Heart left ventricle (tissue), 16 donors: ENCODE measurements at regions of chr3 and their contacts with region 1.

Region 1: DNA sequence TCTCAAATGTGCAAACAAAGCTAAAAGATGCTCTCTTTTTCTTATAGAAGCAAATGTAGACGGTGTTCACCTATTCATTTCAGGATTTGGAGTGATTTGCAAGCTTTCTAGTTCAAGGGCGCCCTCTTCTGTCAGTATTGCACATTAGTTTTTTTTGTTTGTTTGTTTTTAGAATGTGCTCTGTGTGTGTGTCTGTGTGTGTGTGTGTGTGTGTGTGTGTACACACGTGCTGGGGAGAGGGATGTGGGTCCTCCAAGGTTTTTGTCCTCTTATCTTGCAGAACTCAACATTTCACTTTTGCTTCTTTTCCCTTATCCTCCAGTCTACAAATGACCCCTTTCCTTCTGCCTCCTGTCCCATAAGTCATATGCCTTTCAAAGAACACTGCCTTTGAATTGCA is 23.5 kb downstream of the DNAH1 start:
- DNase-seq: peak in 2 of 5 donors; percentile 28 to 35
- ATAC-seq: peak in 3 of 4 donors; percentile 40 to 59 (median 52)
- H3K4me3 ChIP-seq: no peak overlapping the region
- H3K27ac ChIP-seq: no peak overlapping the region
- H3K4me1 ChIP-seq: no peaks in the 10 kb centered on the region
- H3K27me3 ChIP-seq: no peaks in the 10 kb centered on the region
- CTCF ChIP-seq: peak; percentile 53 to 82 (median 72)
- POLR2A ChIP-seq: no peak

Region 2: DNA sequence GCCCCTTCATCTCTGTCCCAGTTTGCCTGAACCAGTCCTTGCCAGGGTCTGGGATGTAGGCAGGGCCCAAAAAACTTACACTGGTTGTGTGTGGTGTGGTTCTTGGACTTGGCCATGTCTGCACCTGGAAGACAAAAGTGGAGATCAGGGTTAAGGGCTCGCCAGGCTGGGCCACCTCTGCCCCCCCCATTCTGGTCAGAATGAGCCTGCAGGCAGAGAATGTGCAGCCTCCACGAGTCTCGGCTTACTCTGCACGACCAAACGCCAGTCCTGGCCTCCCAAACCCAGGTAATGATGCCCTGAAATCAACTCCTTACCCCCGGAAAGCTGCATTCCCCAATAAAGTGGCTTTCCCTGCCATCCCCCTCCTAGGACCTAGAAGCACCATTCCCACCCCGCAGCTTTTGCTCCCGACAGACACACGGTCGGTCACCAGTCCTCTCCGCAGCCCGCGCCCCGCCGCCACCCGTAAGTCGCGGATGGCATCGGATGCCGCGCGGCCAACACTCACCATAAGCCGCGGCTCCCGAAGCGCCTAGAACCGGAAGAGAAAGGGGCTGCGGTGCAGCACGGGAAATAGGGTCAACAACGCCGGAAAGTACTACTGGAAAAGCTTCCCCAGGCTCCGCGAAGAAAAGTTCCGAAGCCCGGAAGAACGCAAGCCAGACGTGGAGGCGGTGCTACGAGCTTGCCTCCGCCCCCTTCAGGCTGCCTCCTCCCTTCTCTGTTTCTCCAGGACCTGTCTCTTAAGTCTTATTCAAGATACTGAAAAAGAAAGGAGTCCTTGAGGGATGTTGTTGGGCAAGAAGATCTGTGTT is 344.1 kb before region 1 on chr3 and contains the start of gene RPL29:
- intact Hi-C with region 1: loop called in 8 of 10 experiments (anchors 5 to 10 kb)
- DNase-seq: peak; percentile 90 to 93 (median 92)
- ATAC-seq: peak; percentile 91 to 96 (median 94)
- H3K4me3 ChIP-seq: peak within 1 kb of the TSS; percentile 67 to 94 (median 76)
- H3K27ac ChIP-seq: peak within 1 kb of the TSS; percentile 63 to 95 (median 85)
- H3K4me1 ChIP-seq: peaks cover 0 to 25% (median 12%) of the 10 kb centered on the region in 12 donors
- H3K27me3 ChIP-seq: no peaks in the 10 kb centered on the region
- CTCF ChIP-seq: peak in 8 of 12 donors; percentile 22 to 67 (median 30)
- POLR2A ChIP-seq: peak in 1 of 2 donors; percentile 56
- total RNA-seq, gene RPL29: 515 to 986 (median 681) TPM

Region 3: GRCh38 chr3:52144034-52144795 is 195.4 kb before region 1 on chr3:
- intact Hi-C with region 1: loop called in 1 of 10 experiments (anchors 5 kb)
- DNase-seq: peak; percentile 86 to 89 (median 89)
- ATAC-seq: peak; percentile 38 to 81 (median 76)
- H3K4me3 ChIP-seq: no peak overlapping the region
- H3K27ac ChIP-seq: no peak overlapping the region
- H3K4me1 ChIP-seq: peaks cover 0 to 21% (median 6%) of the 10 kb centered on the region in 12 donors
- H3K27me3 ChIP-seq: no peaks in the 10 kb centered on the region
- CTCF ChIP-seq: peak; percentile 90 to 99 (median 98)
- POLR2A ChIP-seq: no peak

Region 4: DNA sequence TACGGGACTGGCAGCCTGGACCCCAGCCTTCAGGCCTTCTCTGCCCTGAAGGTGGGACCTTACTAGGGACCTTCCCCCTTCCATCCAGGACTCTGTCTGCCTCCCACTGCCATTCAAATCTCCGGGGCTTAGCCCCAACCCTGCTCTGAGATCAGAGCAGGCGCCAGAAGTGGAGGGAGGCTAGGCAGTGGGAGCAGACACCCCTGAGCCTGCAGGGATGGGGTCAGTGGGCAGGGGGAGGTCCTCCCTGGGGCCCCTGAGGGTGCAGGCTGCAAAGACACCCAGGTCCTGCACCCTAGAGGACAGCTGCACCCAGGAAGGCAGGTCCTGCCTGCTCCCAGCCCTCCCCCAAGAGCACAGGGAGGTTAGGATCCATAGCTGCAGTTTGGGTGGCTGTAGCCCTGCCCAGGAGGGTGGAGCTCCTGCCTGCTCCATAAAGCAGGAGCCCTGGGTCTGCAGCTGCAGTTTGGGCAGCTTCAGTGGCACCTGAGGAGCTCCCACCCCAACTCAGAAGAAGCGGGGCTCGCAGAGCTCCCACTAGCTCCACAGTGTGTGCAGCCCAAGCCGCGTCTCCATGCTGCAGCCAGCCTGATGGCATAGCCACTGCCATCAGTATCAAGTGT is 177.3 kb before region 1 on chr3:
- intact Hi-C with region 1: loop called in 2 of 10 experiments (anchors 5 to 10 kb)
- DNase-seq: no peak
- ATAC-seq: peak in 1 of 4 donors; percentile 29
- H3K4me3 ChIP-seq: no peak overlapping the region
- H3K27ac ChIP-seq: no peak overlapping the region
- H3K4me1 ChIP-seq: no peaks in the 10 kb centered on the region
- H3K27me3 ChIP-seq: no peaks in the 10 kb centered on the region
- CTCF ChIP-seq: no peak
- POLR2A ChIP-seq: no peak

Region 5: DNA sequence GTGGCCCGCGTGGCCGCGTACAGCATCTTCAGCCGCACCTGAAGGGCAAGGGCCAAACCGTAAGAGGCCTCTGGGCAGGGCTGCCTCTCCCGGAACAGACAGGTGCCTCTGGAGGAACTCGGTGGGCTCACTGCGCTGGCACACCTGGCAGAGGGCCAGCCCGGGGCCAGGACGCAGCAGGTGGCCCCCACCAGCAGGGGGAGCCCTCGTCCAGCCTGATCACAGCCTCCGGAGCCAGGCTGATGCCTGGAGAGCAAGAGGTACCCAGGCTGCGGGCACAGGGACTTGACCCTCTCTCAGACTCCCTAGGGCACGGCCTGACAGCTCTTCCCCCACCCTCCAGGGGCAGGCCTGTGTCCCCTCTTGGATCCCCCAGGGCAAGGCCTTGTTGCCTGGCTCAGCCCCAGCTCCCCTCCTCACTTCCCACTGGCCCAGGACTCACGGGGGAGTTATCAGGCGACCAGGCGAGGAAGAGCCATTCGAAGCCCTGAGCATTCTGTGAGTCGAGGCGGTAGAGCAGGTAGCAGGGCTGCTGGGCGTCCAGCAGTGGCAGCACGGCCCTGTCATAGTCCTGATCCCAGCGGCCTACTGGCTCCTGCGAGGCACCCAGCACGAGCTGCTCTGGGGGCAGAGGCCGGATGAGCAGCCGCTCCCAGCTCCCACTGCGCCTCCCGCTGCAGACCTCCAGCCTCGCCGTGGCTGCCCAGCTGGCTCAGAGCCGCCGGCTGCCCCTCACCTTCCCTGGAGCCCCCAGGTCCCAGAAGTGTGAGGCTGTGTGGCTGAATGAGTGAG is 107.9 kb before region 1 on chr3:
- intact Hi-C with region 1: loop called in 6 of 10 experiments (anchors 2 to 5 kb)
- DNase-seq: peak; percentile 72 to 91 (median 80)
- ATAC-seq: peak in 3 of 4 donors; percentile 8 to 37 (median 37)
- H3K4me3 ChIP-seq: peak overlapping the region in 6 of 12 donors; percentile 0 to 59 (median 24)
- H3K27ac ChIP-seq: peak overlapping the region in 2 of 12 donors; percentile 4 to 33
- H3K4me1 ChIP-seq: peaks cover 0 to 51% (median 31%) of the 10 kb centered on the region in 12 donors
- H3K27me3 ChIP-seq: no peaks in the 10 kb centered on the region
- CTCF ChIP-seq: peak; percentile 80 to 92 (median 83)
- POLR2A ChIP-seq: no peak

Region 6: GRCh38 chr3:52291508-52292181 is 48.0 kb before region 1 on chr3:
- intact Hi-C with region 1: loop called (anchors 1 to 5 kb)
- DNase-seq: no peak
- ATAC-seq: no peak
- H3K4me3 ChIP-seq: no peak overlapping the region
- H3K27ac ChIP-seq: no peak overlapping the region
- H3K4me1 ChIP-seq: peaks cover 0 to 20% (median 11%) of the 10 kb centered on the region in 12 donors
- H3K27me3 ChIP-seq: no peaks in the 10 kb centered on the region
- CTCF ChIP-seq: peak; percentile 38 to 60 (median 52)
- POLR2A ChIP-seq: no peak

Region 7: GRCh38 chr3:52372822-52373504 is 33.4 kb after region 1 on chr3:
- intact Hi-C with region 1: no loop called
- DNase-seq: peak in 3 of 5 donors; percentile 49 to 54 (median 51)
- ATAC-seq: no peak
- H3K4me3 ChIP-seq: peak overlapping the region in 9 of 12 donors; percentile 8 to 37 (median 24)
- H3K27ac ChIP-seq: peak overlapping the region in 3 of 12 donors; percentile 15 to 43 (median 19)
- H3K4me1 ChIP-seq: peaks cover 0 to 14% (median 0%) of the 10 kb centered on the region in 12 donors
- H3K27me3 ChIP-seq: no peaks in the 10 kb centered on the region
- CTCF ChIP-seq: peak in 1 of 12 donors; percentile 19
- POLR2A ChIP-seq: no peak

Region 8: GRCh38 chr3:52636673-52637072 is 297.1 kb after region 1 on chr3:
- intact Hi-C with region 1: no loop called
- DNase-seq: no peak
- ATAC-seq: no peak
- H3K4me3 ChIP-seq: no peak overlapping the region
- H3K27ac ChIP-seq: no peak overlapping the region
- H3K4me1 ChIP-seq: no peaks in the 10 kb centered on the region
- H3K27me3 ChIP-seq: no peaks in the 10 kb centered on the region
- CTCF ChIP-seq: no peak
- POLR2A ChIP-seq: no peak